ENCODE measurements at regions of chr1 and their contacts with region 1.

Region 1: DNA sequence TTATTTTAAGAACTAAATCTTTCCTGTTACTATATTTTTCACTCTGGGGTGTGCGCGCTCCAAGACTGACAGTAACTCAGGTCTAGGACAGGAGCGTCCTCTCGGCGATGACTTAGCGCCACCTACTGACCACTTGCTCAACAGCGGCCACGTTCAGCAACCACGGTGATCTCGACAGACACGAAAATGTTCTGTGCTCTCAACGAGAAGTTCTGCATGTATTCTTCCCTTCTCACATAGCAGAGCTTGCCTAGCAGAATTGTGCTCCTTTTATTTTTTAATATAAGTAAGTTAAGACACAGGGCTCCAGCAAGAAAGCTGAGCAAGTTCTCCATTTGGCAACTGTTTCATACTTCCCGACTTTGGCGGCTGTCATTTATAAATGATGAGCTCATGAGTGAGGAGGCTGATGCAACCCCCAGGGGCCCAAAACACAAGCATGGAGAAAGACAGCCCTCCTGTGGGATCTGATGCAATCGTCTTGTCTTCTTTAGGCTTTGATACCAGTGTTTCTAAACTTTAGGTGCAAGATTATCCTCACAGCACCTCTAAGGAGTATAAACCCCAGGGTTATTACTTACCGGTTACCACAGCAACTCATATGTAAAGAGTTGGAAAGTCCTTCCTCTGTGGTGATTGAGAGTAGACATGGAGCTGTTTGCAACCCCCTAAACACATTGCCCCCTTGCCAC is 92.6 kb downstream of the HHIPL2 start:
- DNase-seq: peak; percentile 82
- H3K4me3 Mint-ChIP-seq: no peak overlapping the region
- H3K27ac Mint-ChIP-seq: no peak overlapping the region
- H3K4me1 Mint-ChIP-seq: peaks cover 2% of the 10 kb centered on the region
- H3K27me3 Mint-ChIP-seq: no peaks in the 10 kb centered on the region

Region 2: GRCh38 chr1:222095606-222096475 is 359.5 kb before region 1 on chr1:
- CTCF ChIA-PET with region 1: interaction called, 66 read pairs
- POLR2A ChIA-PET with region 1: no interaction called
- DNase-seq: peak; percentile 62
- H3K4me3 Mint-ChIP-seq: no peak overlapping the region
- H3K27ac Mint-ChIP-seq: no peak overlapping the region
- H3K4me1 Mint-ChIP-seq: no peaks in the 10 kb centered on the region
- H3K27me3 Mint-ChIP-seq: no peaks in the 10 kb centered on the region

Region 3: DNA sequence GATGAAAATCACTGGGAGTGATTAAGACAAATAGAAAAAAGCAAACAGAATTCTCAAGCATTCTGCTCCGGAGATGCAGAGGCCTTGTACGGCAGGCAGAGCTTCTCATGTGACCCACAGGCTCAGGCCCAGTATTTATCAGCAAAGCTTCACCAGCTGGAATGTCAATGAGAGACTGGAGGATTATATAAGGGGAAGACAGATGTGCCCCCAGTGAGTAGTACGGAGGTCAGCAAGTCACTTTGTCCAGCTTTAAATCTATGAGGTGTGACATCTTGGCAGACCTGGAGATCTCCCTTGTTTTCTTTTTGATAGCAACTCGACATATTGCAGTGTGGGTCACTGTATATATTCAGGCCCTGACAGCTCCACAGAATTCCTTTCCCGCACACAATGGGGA is 14.3 kb before region 1 on chr1:
- CTCF ChIA-PET with region 1: interaction called, 10 read pairs
- POLR2A ChIA-PET with region 1: no interaction called
- DNase-seq: no peak
- H3K4me3 Mint-ChIP-seq: no peak overlapping the region
- H3K27ac Mint-ChIP-seq: no peak overlapping the region
- H3K4me1 Mint-ChIP-seq: no peaks in the 10 kb centered on the region
- H3K27me3 Mint-ChIP-seq: no peaks in the 10 kb centered on the region

Region 4: DNA sequence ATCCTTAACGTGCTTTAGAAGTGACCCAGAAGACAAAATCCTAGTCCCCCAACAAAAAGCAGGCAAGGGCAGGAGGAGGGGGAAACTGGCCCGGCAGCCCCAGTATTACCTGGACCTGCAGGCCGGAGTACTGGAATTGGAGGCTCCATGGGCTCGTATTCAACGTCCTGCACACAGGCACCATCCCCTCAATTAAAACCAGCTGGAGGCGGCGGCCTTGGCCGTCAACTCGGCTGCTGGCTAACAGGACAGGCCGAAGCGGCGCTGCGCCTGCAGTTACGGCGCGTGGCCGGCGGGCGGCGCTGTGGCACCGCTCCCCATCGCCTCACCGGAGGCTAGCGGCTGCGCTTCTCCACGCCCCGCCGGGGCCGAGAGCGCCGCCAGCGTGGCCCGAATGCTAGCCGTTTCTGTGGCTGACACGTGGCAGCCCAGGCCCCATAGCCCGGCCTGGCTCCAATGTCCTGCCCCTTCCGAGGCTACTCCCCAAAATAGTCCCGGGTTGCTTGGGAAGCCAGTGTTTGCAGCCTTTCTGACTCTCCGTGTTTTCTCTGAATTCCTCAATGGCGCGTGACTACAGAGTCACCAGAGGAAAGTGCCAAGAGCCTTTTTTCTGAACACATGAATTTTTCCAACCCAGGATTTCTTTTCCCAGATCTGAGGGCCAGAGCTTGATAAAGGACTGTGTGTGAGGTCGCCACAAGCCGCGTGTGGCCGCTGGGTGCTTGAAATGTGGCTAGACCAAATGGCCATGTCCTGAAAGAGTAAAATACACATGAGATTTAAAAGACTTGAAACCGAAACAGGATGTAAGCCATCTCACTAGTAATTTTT is 10.1 kb after region 1 on chr1:
- CTCF ChIA-PET with region 1: interaction called, 28 read pairs
- POLR2A ChIA-PET with region 1: no interaction called
- DNase-seq: peak; percentile 81
- H3K4me3 Mint-ChIP-seq: peak overlapping the region; percentile 71
- H3K27ac Mint-ChIP-seq: peak overlapping the region; percentile 47
- H3K4me1 Mint-ChIP-seq: peaks cover 10% of the 10 kb centered on the region
- H3K27me3 Mint-ChIP-seq: peaks cover 13% of the 10 kb centered on the region

Region 5: DNA sequence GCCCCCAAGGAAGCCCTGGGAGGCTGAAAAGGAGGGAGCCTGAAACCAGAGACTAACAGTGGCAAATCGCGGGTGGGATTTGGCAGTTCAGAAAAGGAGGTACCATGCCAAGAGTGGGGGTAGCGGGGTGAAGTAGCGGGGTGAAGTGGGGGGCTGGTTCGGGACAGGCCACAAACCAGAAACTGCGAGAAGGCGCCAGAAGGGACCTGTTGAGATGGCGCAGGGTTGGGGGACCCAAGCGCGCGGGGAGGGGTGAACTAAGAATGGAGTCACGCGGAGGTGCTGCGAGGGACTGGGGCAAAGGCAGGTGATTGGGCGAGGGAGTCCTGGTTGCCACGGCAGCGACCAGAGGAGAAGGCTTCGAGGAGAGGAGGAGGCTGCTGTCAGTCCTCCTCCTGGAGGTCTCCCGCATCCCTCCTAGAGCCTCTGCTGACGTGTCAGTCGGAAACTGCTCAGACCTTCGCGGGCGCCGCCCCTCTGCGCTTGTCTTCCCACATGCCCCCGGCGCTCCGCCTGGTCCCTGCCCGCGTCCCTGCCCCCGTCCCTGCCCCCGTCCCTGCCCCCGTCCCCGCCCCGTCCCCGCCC is 162.1 kb after region 1 on chr1:
- CTCF ChIA-PET with region 1: no interaction called
- POLR2A ChIA-PET with region 1: no interaction called
- DNase-seq: peak; percentile 92
- H3K4me3 Mint-ChIP-seq: peak overlapping the region; percentile 77
- H3K27ac Mint-ChIP-seq: peak overlapping the region; percentile 67
- H3K4me1 Mint-ChIP-seq: peaks cover 24% of the 10 kb centered on the region
- H3K27me3 Mint-ChIP-seq: peaks cover 30% of the 10 kb centered on the region

Region 6: DNA sequence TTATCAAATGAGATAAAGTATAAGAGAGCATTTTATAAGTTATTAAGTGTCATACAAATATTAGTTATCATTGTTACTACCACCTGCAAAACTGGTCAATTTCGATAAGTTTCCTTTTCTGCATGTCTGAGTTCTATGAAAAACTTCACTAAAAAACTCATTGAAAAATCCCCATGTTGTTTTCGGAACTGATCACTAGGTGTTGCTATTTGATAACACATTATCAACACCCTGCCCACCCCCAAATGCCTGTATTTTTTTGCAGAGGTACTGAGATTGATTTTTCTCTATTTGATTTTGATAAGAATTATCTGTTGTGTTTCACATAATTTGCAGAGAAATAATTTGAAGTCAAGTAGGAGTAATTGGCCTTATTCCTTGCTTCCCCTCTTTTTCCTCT is 337.4 kb after region 1 on chr1:
- CTCF ChIA-PET with region 1: no interaction called
- POLR2A ChIA-PET with region 1: no interaction called
- DNase-seq: no peak
- H3K4me3 Mint-ChIP-seq: no peak overlapping the region
- H3K27ac Mint-ChIP-seq: no peak overlapping the region
- H3K4me1 Mint-ChIP-seq: peaks cover 9% of the 10 kb centered on the region
- H3K27me3 Mint-ChIP-seq: no peaks in the 10 kb centered on the region